Psoas muscle (tissue), 8 donors: ENCODE measurements at regions of chr7 and their contacts with region 1.

Region 1: GRCh38 chr7:138510003-138510402 is 49.9 kb downstream of the TRIM24 start:
- DNase-seq: no peak
- ATAC-seq: no peak
- H3K4me3 ChIP-seq: no peak overlapping the region
- H3K27ac ChIP-seq: no peak overlapping the region
- H3K4me1 ChIP-seq: peaks cover 4% of the 10 kb centered on the region
- H3K27me3 ChIP-seq: no peaks in the 10 kb centered on the region
- CTCF ChIP-seq: no peak

Region 2: GRCh38 chr7:138470391-138471157 is 39.4 kb before region 1 on chr7:
- intact Hi-C with region 1: loop called in 1 of 2 experiments (anchors 5 kb)
- DNase-seq: no peak
- ATAC-seq: no peak
- H3K4me3 ChIP-seq: no peak overlapping the region
- H3K27ac ChIP-seq: no peak overlapping the region
- H3K4me1 ChIP-seq: peaks cover 25% of the 10 kb centered on the region
- H3K27me3 ChIP-seq: no peaks in the 10 kb centered on the region
- CTCF ChIP-seq: no peak